MCF 10A (cell line): ENCODE measurements at regions of chr9 and their contacts with region 1.

Region 1: GRCh38 chr9:84668196-84669012 is 1.1 kb upstream of the NTRK2 start:
- DNase-seq: peak; percentile 59
- H3K4me3 Mint-ChIP-seq: peak overlapping the region; percentile 80
- H3K27ac Mint-ChIP-seq: no peak overlapping the region
- H3K4me1 Mint-ChIP-seq: peaks cover 14% of the 10 kb centered on the region
- H3K27me3 Mint-ChIP-seq: peaks cover 25% of the 10 kb centered on the region
- CTCF ChIP-seq: peak; percentile 50

Region 2: DNA sequence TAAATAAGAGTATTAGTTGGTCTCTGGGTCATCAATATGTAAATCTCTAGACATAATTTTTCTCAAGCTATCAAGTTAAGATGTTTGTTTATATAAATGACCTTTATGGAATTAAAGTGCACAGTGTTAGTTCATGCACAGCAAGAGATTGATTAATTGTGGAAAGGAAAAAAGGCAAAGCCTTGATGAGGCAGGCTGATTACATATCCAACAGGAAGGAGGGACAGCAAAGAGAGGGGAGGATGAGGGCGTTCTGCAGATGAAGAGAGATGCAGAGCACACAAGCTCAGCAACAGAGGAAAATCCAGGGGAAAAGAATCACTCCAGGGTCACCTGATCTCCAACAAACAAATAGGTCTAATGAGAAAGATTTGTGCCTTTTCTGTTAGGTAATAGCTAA is 17.7 kb after region 1 on chr9:
- CTCF ChIA-PET with region 1: no interaction called
- POLR2A ChIA-PET with region 1: no interaction called
- intact Hi-C with region 1: no loop called
- DNase-seq: no peak
- H3K4me3 Mint-ChIP-seq: no peak overlapping the region
- H3K27ac Mint-ChIP-seq: no peak overlapping the region
- H3K4me1 Mint-ChIP-seq: no peaks in the 10 kb centered on the region
- H3K27me3 Mint-ChIP-seq: no peaks in the 10 kb centered on the region
- CTCF ChIP-seq: no peak

Region 3: DNA sequence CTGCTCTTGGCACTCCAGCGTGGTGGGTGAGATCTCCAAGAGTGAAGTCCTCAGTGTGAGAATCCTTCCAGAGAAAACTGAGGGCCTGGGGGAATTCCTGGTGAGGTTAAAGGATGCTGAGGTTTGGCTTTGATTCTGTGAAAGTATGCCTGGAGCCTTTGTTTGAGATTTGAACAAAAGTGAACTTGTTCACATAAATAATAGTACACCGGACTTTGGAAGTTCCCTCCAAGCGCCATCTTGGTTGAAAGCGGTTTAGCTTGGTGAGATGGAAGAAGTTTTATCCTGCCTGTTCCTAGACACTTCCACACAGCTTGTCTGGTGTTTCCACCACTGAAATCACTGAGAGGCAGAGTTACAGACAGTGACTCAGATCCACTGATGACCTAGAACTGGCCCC is 287.6 kb after region 1 on chr9:
- CTCF ChIA-PET with region 1: no interaction called
- POLR2A ChIA-PET with region 1: no interaction called
- intact Hi-C with region 1: no loop called
- DNase-seq: no peak
- H3K4me3 Mint-ChIP-seq: no peak overlapping the region
- H3K27ac Mint-ChIP-seq: no peak overlapping the region
- H3K4me1 Mint-ChIP-seq: peaks cover 7% of the 10 kb centered on the region
- H3K27me3 Mint-ChIP-seq: no peaks in the 10 kb centered on the region
- CTCF ChIP-seq: no peak

Region 4: GRCh38 chr9:85425153-85425611 is 756.8 kb after region 1 on chr9:
- CTCF ChIA-PET with region 1: no interaction called
- POLR2A ChIA-PET with region 1: no interaction called
- intact Hi-C with region 1: loop called (anchors 10 kb)
- DNase-seq: peak; percentile 72
- H3K4me3 Mint-ChIP-seq: no peak overlapping the region
- H3K27ac Mint-ChIP-seq: no peak overlapping the region
- H3K4me1 Mint-ChIP-seq: peaks cover 5% of the 10 kb centered on the region
- H3K27me3 Mint-ChIP-seq: peaks cover 17% of the 10 kb centered on the region
- CTCF ChIP-seq: peak; percentile 78